PC-3 (cell line): ENCODE measurements at regions of chr12 and their contacts with region 1.

Region 1: DNA sequence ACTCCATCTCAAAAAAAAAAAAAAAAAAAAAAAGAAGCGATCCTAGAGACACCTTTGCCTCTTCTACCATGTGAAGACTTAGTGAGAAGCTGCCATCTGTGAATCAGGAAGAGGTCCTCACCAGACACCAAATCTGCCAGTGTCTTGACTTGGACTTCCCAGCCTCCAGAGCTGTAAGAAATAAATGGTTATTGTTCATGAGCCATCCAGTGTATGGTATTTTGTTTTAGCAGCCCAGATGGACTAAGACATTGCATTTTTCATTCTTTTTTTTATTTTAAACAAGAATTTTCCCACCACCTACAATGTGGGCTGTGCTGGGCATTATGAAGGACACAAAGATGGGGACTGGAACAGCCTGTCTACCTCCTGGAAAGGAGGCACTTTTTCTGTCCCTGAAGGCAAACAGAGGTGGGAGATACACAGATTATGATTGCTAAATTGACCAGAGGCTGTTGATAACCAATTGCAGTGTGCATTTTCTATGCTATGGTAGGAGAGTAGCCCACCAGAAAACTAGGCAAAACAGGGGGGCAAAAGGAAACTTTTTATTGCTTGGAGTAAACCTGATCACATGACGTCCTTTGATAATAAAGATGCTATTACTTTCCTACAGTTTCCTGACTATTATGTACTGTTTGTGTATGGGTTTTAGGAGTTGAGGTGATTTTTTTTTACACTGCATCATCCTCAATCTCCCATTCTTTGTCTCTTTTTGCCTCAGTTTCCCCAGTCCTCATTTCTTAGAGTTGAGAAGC is 2.8 kb upstream of the C12orf43 start:
- DNase-seq: no peak
- ATAC-seq: no peak
- H3K4me3 ChIP-seq: no peak overlapping the region
- H3K27ac ChIP-seq: no peak overlapping the region
- H3K4me1 ChIP-seq: peaks cover 9% of the 10 kb centered on the region; the same call in 1 of the 2 replicates
- H3K27me3 ChIP-seq: no peaks in the 10 kb centered on the region
- CTCF ChIP-seq: no peak

Region 2: GRCh38 chr12:120932058-120932457 is 87.0 kb before region 1 on chr12:
- CTCF ChIA-PET with region 1: interaction called, 17 read pairs
- POLR2A ChIA-PET with region 1: no interaction called
- intact Hi-C with region 1: no loop called
- DNase-seq: no peak
- ATAC-seq: no peak
- H3K4me3 ChIP-seq: no peak overlapping the region
- H3K27ac ChIP-seq: no peak overlapping the region
- H3K4me1 ChIP-seq: peaks cover 9% of the 10 kb centered on the region
- H3K27me3 ChIP-seq: no peaks in the 10 kb centered on the region
- CTCF ChIP-seq: no peak

Region 3: DNA sequence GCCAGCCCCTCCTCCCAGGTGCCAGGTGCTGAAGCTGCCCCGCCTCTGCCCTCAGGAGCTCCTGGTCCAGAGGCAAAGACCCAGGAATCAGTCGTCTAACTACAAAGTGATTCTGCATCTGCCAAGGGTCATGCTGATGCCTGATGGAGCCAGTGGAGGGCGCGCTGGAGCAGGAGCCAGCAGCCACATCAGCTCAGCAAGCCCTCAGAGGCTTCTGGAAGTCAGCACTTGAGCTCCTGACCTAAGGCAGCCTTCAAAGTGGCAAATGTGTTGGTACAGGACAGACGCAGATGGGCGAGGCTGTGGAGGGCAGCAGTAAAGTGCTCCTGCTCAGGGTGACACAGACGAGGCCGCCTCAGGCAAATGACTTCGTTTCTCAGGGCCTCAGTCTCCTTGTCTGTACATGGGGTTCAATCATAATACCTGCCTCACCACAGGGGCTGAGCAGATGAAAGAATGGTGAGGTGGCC is 13.7 kb before region 1 on chr12:
- CTCF ChIA-PET with region 1: interaction called, 12 read pairs
- POLR2A ChIA-PET with region 1: no interaction called
- intact Hi-C with region 1: no loop called
- DNase-seq: peak; percentile 72
- ATAC-seq: peak; percentile 66
- H3K4me3 ChIP-seq: no peak overlapping the region
- H3K27ac ChIP-seq: no peak overlapping the region
- H3K4me1 ChIP-seq: no peaks in the 10 kb centered on the region
- H3K27me3 ChIP-seq: no peaks in the 10 kb centered on the region
- CTCF ChIP-seq: peak; percentile 84

Region 4: GRCh38 chr12:121190523-121191031 is 171.5 kb after region 1 on chr12:
- CTCF ChIA-PET with region 1: no interaction called
- POLR2A ChIA-PET with region 1: no interaction called
- intact Hi-C with region 1: no loop called
- DNase-seq: peak; percentile 68
- ATAC-seq: peak; percentile 48
- H3K4me3 ChIP-seq: no peak overlapping the region
- H3K27ac ChIP-seq: no peak overlapping the region
- H3K4me1 ChIP-seq: peaks cover 10% of the 10 kb centered on the region
- H3K27me3 ChIP-seq: no peaks in the 10 kb centered on the region
- CTCF ChIP-seq: no peak